Vagina (tissue), 2 donors: ENCODE measurements at regions of chr11 and their contacts with region 1.

Region 1: DNA sequence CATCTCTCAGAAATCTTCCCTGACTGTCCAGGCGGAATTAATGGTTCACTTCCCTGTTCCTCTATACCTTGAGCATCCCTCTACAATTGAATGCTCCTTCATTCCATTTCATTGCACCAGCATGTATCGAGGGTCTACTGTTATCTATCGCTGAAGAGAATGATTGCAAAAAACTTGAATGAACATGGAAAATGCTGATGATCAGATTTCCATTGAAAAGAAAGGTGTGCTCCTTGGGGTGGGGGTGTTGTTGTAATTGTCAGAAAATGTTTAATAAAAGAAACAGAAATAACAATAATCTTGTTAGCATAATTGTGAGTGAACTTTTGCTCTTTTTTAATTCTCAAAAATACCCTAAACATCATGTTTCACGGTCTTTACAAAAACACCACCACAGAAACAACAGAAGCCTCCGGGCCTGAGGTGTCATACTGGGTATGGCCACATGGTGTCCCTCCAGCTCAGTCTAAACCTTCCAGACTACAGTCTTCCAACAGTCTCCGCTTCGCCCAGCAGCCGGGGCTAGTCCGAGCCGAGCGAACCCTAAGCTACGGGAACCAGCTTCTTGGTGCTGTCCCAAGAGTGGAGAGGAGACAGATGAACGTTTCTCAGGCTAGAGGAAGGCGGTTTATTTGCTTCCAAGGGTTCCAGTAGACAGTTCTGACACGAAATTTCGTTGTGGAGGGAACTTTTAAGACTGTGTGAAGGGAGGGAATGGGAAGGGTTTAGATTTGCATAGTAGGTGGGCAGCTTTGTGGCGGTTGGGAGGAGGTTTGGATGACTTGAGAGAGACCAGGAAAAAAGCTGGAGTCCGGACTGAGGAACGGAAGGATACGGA is 75.8 kb upstream of the ZBED5 start:
- DNase-seq: peak in 1 of 2 donors; percentile 91
- H3K4me3 ChIP-seq: peak overlapping the region; percentile 39 to 51
- H3K27ac ChIP-seq: peak overlapping the region; percentile 87
- H3K4me1 ChIP-seq: peaks cover 22% of the 10 kb centered on the region
- H3K27me3 ChIP-seq: no peaks in the 10 kb centered on the region
- CTCF ChIP-seq: peak; percentile 88 to 98 (median 96)
- POLR2A ChIP-seq: no peak

Region 2: GRCh38 chr11:10808553-10809372 is 124.9 kb before region 1 on chr11 and contains the start of gene EIF4G2:
- intact Hi-C with region 1: loop called (anchors 1 kb)
- DNase-seq: peak; percentile 99
- H3K4me3 ChIP-seq: peak within 1 kb of the TSS; percentile 50 to 93
- H3K27ac ChIP-seq: peak within 1 kb of the TSS; percentile 99
- H3K4me1 ChIP-seq: peaks cover 39% of the 10 kb centered on the region
- H3K27me3 ChIP-seq: no peaks in the 10 kb centered on the region
- CTCF ChIP-seq: no peak
- POLR2A ChIP-seq: peak; percentile 79 to 98
- total RNA-seq, gene EIF4G2: 368 TPM

Region 3: DNA sequence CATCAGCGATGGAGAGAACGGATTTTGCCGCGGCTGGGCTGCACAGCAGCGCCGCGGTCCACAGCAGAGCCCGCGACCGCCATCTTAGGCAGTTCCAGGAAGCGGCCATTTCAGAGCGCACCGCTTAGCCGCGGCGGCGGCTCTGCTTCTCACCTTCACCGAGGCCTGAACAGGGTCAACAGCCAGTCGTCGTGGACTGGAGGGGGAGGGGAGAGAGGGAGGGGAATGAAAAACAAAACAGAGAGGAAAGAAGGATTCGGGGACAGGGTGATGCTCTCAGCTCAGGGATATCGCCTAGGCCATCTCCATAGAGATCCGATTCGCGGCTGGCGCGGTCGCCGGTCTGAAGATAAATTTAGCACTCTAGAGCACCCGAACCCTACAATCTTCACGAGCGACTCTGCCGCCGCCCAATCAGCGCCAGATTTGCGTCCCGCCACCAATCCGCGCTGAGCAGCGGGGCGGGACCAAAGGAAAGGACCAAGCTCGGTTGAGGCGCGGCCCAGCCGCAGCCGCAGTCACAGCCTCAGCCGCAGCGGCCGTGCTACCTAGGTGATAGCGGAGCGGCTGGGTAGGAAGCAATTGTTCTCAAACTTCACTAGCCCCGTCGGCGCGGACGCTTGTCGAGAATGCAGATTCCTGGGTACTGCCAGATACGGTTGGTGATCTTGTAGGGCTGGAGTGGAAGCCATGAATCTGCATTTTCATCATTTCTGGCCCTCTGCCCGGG is 75.8 kb before region 1 on chr11 and contains the start of gene ZBED5:
- intact Hi-C with region 1: loop called (anchors 5 kb)
- DNase-seq: peak in 1 of 2 donors; percentile 98
- H3K4me3 ChIP-seq: peak within 1 kb of the TSS; percentile 63 to 91
- H3K27ac ChIP-seq: peak within 1 kb of the TSS; percentile 96
- H3K4me1 ChIP-seq: peaks cover 38% of the 10 kb centered on the region
- H3K27me3 ChIP-seq: no peaks in the 10 kb centered on the region
- CTCF ChIP-seq: peak in 1 of 3 experiments; percentile 13
- POLR2A ChIP-seq: peak; percentile 68 to 89
- total RNA-seq, gene ZBED5: 40.8 TPM

Region 4: DNA sequence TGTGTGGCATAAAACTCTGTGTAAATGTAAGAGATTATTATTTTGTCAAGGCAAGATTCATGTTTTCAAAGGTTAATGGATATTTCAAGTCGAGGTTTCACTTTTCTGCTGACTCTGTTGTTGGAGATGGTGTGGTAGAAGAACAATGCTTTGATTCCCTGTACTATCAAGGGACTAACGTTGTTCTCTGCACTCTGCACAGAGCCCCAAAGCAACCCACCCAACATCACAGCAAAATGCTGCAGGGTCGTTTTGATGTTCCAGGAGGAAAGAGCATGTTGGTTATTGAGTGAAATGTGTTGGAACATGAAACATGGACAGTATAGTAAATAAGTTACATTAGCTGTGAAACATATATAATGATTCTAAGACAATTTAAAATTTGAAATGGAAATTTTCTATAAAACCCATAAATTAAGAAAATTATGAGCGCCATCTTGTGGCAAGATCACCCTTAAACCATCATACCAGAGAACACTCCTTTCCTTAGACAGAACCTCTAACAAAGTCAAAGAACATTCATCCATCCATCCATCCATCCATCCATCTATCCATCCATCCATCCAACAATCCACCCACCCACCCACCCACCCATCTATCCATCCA is 88.6 kb after region 1 on chr11:
- intact Hi-C with region 1: loop called (anchors 5 kb)
- DNase-seq: no peak
- H3K4me3 ChIP-seq: no peak overlapping the region
- H3K27ac ChIP-seq: no peak overlapping the region
- H3K4me1 ChIP-seq: no peaks in the 10 kb centered on the region
- H3K27me3 ChIP-seq: no peaks in the 10 kb centered on the region
- CTCF ChIP-seq: peak; percentile 16 to 38 (median 25)
- POLR2A ChIP-seq: no peak

Region 5: GRCh38 chr11:11787305-11788062 is 853.8 kb after region 1 on chr11:
- intact Hi-C with region 1: loop called (anchors 10 kb)
- DNase-seq: no peak
- H3K4me3 ChIP-seq: no peak overlapping the region
- H3K27ac ChIP-seq: no peak overlapping the region
- H3K4me1 ChIP-seq: no peaks in the 10 kb centered on the region
- H3K27me3 ChIP-seq: no peaks in the 10 kb centered on the region
- CTCF ChIP-seq: peak; percentile 83 to 93 (median 91)
- POLR2A ChIP-seq: no peak